AG04450 (cell line): ENCODE measurements at regions of chr7 and their contacts with region 1.

Region 1: DNA sequence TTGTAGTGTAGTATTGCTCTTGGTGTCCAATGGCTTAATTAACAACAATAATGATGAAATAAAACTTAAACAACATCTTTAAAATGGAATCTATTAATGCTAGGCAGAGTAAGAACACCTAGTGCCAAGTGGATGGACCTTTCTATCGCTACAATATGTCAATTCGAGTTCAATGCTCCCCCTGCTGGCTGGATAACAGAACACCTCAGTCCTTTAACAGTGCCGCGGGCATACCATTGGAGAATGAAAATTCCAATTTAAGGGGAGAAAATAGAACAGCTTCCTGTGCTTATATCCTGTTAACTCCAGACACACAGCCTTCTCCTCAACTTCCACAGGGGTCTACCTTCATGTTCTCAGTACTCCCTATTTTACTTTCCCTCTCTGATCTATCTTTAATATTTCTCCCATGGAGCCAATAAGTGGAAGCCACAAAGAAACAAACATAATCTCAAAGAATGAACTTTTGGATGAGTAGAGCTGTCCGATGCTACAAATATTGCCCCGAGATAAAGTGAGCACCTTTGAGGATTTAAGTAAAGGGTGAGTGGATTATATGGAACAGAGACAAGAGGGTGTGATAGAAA is 41.4 kb downstream of the COL1A2 start:
- DNase-seq: no peak
- H3K4me3 ChIP-seq: no peak overlapping the region
- H3K27ac ChIP-seq: no peak overlapping the region
- H3K27me3 ChIP-seq: no peaks in the 10 kb centered on the region
- CTCF ChIP-seq: peak; percentile 82

Region 2: GRCh38 chr7:94301024-94301586 is 135.0 kb before region 1 on chr7:
- CTCF ChIA-PET with region 1: interaction called, 539 read pairs
- POLR2A ChIA-PET with region 1: interaction called, 11 read pairs
- DNase-seq: peak; percentile 94
- H3K4me3 ChIP-seq: peak overlapping the region; percentile 44
- H3K27ac ChIP-seq: peak overlapping the region; percentile 98
- H3K27me3 ChIP-seq: no peaks in the 10 kb centered on the region
- CTCF ChIP-seq: peak; percentile 40

Region 3: DNA sequence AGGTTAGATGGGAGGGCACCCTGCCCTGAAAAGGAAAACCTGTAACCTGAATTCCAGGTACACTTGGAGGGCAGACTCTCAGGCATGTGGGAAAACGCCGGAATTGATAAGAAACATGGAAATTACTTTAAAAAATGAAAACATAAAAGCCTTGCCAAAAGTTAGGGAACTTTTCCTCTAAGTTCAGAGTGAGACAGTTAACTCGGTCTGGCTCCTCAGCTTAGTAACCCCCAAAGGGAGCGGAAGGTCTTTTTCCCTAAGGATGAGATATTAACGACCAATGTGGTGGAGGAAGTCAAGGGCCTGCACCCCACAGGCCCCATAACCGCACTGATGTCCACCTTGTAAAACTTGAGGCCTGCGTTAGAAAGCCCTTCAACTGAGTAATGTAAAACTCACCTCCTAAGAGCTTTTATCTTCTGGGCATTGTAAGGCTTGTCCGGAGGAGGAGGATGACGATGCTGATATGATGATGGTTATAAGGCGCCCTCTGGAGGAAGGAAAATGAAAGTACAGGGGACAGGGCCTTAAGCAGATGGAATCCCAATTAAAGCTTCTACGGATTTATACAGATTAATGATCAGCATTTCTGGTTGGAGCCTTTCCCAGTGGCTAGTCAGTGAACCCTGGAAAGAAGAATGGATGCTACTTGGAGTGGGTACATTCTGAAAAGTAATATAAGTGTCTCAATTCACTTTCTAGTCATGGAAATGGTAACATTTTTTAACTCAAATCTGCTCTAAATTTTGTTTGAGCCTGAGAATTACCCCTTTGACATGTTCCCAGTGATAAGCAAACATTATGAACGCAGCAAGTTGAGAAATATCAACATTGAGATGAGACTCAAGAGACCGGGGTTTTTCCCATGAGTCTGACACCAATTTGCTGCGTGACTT is 40.7 kb before region 1 on chr7:
- CTCF ChIA-PET with region 1: interaction called, 7 read pairs
- POLR2A ChIA-PET with region 1: interaction called, 10 read pairs
- DNase-seq: peak; percentile 64
- H3K4me3 ChIP-seq: peak overlapping the region; percentile 96
- H3K27ac ChIP-seq: peak overlapping the region; percentile 98
- H3K27me3 ChIP-seq: no peaks in the 10 kb centered on the region
- CTCF ChIP-seq: peak; percentile 77

Region 4: DNA sequence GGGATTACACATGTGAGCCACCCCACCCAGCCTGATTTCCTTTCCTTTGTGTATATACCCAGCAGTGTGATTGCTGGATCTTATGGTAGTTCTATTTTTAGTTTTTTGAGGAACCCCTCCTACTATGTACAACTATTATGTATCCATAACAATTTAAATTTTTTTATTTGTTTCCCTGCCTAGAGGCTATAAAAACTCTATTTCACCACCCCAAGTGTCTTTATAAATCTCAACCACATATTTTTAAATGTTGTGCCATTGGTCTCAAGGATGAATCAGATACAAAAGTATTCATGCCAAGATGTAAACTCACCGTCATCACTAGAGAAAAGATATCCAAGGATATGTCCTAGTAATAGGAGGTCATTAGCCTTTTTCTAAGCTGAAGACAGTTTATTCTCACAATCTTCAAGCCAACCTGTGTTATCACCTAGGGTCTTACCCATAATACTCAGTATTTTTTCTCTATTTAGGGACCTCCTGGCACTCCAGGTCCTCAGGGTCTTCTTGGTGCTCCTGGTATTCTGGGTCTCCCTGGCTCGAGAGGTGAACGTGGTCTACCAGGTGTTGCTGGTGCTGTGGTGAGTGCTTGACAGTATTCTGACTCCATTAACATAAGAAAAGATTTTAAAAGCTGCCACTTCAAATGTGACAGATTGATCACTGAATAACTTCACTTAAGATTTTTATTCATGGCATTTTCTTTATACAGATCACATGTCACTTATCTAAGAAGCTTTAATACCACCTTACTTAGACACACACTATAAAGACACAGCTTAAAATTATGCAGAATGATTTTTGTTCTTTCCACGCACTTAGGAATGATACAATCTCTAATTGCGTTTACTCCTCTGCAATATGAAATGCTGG is 12.0 kb before region 1 on chr7:
- CTCF ChIA-PET with region 1: interaction called, 32 read pairs
- POLR2A ChIA-PET with region 1: interaction called, 7 read pairs
- DNase-seq: peak; percentile 42
- H3K4me3 ChIP-seq: no peak overlapping the region
- H3K27ac ChIP-seq: peak overlapping the region; percentile 89
- H3K27me3 ChIP-seq: no peaks in the 10 kb centered on the region
- CTCF ChIP-seq: no peak